ENCODE measurements at regions of chr19 and their contacts with region 1.

Region 1: GRCh38 chr19:42244347-42245220 is 2.2 kb upstream of the GSK3A start:
- DNase-seq: peak; percentile 85
- ATAC-seq: peak; percentile 65
- H3K4me3 ChIP-seq: peak overlapping the region; percentile 90
- H3K27ac ChIP-seq: peak overlapping the region; percentile 85
- H3K4me1 ChIP-seq: peaks cover 17% of the 10 kb centered on the region
- H3K27me3 ChIP-seq: no peaks in the 10 kb centered on the region
- CTCF ChIP-seq: peak; percentile 59 to 83 (median 68); a peak in 5 of 6 replicates
- EP300 ChIP-seq: no peak
- POLR2A ChIP-seq: peak; percentile 63
- RAD21 ChIP-seq: peak; percentile 40; the same call in 1 of the 2 replicates

Region 2: DNA sequence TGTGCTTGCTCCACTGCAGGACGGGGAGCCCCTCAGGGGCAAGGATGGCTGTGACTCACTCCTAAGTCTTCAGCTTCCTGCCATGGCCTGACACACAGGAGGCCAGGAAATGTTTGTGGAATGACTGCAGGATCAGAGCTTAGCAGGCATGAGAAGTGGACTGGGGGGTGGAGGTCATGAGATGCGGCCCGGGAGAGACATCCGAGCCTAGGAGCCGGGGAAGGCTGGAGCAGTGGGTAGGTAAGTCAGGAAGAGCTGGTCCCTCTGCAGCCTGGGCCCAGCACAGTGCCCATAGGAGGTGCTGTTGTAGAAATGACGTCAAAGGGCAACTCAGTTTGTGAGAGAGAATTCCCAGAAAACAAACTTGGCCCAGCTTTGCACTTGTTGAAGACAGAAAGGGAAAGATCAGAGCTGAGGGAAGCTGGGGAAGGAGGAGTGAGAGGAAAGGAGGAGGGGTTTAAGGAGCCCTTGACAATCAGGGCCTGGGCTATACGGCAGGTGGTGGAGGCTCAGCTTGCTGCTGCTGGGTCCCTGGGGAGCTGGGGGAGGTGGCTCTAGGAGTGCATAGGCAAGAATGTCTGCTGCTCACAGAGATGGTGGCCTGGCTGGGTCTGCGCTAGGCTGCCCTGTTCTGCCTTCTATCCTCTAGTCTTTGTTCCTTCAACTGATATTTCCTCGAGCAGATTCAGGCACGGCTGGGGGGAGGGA is 130.8 kb before region 1 on chr19:
- CTCF ChIA-PET with region 1: interaction called, 8 read pairs
- POLR2A ChIA-PET with region 1: interaction called, 18 read pairs
- RAD21 ChIA-PET with region 1: interaction called, 10 read pairs
- SMC1A ChIA-PET with region 1: interaction called, 5 read pairs
- in situ Hi-C with region 1: no loop called
- intact Hi-C with region 1: no loop called
- DNase-seq: peak; percentile 40
- ATAC-seq: peak; percentile 90
- H3K4me3 ChIP-seq: 0 out of 2 replicates have a peak overlapping the region, but pooled peaks have one; percentile 2
- H3K27ac ChIP-seq: peak overlapping the region; percentile 88
- H3K4me1 ChIP-seq: peaks cover 53% of the 10 kb centered on the region
- H3K27me3 ChIP-seq: no peaks in the 10 kb centered on the region
- CTCF ChIP-seq: peak in 2 of 3 experiments; percentile 8 to 18; a peak in 1 of 6 replicates
- EP300 ChIP-seq: no peak
- POLR2A ChIP-seq: 0 out of 2 replicates have a peak, but pooled peaks have one; percentile 21
- RAD21 ChIP-seq: no peak

Region 3: DNA sequence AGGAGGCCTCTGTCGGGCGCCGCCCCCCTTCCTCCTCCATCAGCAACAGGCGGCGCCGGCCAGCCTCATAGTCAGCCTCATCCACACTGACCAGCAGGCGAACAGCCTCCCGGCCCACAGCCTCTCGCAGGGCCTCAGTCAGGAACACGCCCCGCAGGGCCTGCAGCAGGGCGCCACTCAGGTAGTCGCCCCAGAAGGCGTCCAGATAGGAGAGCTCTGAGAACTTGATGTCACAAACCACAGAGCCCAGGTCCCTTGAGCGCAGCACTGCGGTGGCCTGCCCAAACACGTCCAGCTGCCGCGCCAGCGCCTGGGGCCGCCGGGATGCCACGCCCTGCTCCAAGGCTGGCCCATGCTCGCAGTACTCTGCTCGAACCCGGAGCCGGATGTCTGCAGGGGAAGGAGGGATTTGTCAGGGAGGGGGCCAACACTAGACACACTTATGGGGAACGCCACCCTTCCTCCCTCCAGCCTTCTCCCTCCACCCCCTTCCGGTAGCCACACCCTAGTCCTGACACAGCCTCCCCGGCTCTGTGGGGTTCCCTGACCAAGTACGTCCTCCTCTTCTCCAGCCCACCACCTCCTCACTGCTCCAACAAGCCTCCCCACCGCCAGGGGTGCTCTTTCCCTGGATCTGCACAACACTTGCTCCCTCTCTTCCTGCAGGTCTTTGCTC is 45.0 kb before region 1 on chr19:
- CTCF ChIA-PET with region 1: interaction called, 11 read pairs
- POLR2A ChIA-PET with region 1: interaction called, 16 read pairs
- RAD21 ChIA-PET with region 1: interaction called, 6 read pairs
- SMC1A ChIA-PET with region 1: interaction called, 23 read pairs
- in situ Hi-C with region 1: no loop called
- intact Hi-C with region 1: no loop called
- DNase-seq: peak; percentile 68
- ATAC-seq: peak; percentile 77
- H3K4me3 ChIP-seq: peak overlapping the region; percentile 41
- H3K27ac ChIP-seq: peak overlapping the region; percentile 95
- H3K4me1 ChIP-seq: peaks cover 59% of the 10 kb centered on the region
- H3K27me3 ChIP-seq: no peaks in the 10 kb centered on the region
- CTCF ChIP-seq: peak; percentile 55 to 67 (median 61)
- EP300 ChIP-seq: no peak
- POLR2A ChIP-seq: peak; percentile 74
- RAD21 ChIP-seq: peak; percentile 40

Region 4: GRCh38 chr19:42254989-42255765 is 10.6 kb after region 1 on chr19 and contains the start of gene ERF:
- CTCF ChIA-PET with region 1: interaction called, 5 read pairs
- POLR2A ChIA-PET with region 1: interaction called, 13 read pairs
- RAD21 ChIA-PET with region 1: interaction called, 3 read pairs
- SMC1A ChIA-PET with region 1: interaction called, 3 read pairs
- in situ Hi-C with region 1: no loop called
- intact Hi-C with region 1: no loop called
- DNase-seq: peak; percentile 45
- ATAC-seq: peak; percentile 79
- H3K4me3 ChIP-seq: peak within 1 kb of the TSS; percentile 99
- H3K27ac ChIP-seq: peak within 1 kb of the TSS; percentile 94
- H3K4me1 ChIP-seq: peaks cover 16% of the 10 kb centered on the region
- H3K27me3 ChIP-seq: no peaks in the 10 kb centered on the region
- CTCF ChIP-seq: no peak
- EP300 ChIP-seq: no peak
- POLR2A ChIP-seq: peak; percentile 89
- RAD21 ChIP-seq: no peak
- polyA plus RNA-seq, gene ERF: 0.02 to 0.04 TPM

Region 5: GRCh38 chr19:42283143-42284065 is 38.8 kb after region 1 on chr19:
- CTCF ChIA-PET with region 1: interaction called, 111 read pairs
- POLR2A ChIA-PET with region 1: interaction called, 51 read pairs
- RAD21 ChIA-PET with region 1: interaction called, 82 read pairs
- SMC1A ChIA-PET with region 1: interaction called, 70 read pairs
- in situ Hi-C with region 1: no loop called
- intact Hi-C with region 1: loop called (anchors 2 kb)
- DNase-seq: peak; percentile 69
- ATAC-seq: peak; percentile 66
- H3K4me3 ChIP-seq: peak overlapping the region; percentile 61
- H3K27ac ChIP-seq: peak overlapping the region; percentile 78
- H3K4me1 ChIP-seq: peaks cover 50% of the 10 kb centered on the region
- H3K27me3 ChIP-seq: no peaks in the 10 kb centered on the region
- CTCF ChIP-seq: peak in 1 of 3 experiments; percentile 22; a peak in 1 of 6 replicates
- EP300 ChIP-seq: no peak
- POLR2A ChIP-seq: peak; percentile 68
- RAD21 ChIP-seq: no peak